HEK293T (cell line): ENCODE measurements at regions of chr4 and their contacts with region 1.

Region 1: GRCh38 chr4:163494360-163495162 is at the start of gene TMA16:
- DNase-seq: peak; percentile 83

Region 2: GRCh38 chr4:163505374-163505773 is 10.8 kb after region 1 on chr4:
- CTCF ChIA-PET with region 1: no interaction called
- POLR2A ChIA-PET with region 1: interaction called, 42 read pairs
- DNase-seq: no peak